Activated B cell treated with CpG ODN at 0.5 μM for 24 hours (primary cell): ENCODE measurements at regions of chr12 and their contacts with region 1.

Region 1: GRCh38 chr12:51341259-51342007 is 5.0 kb downstream of the CELA1 start:
- DNase-seq: peak; percentile 30
- ATAC-seq: peak; percentile 87
- H3K4me3 Mint-ChIP-seq: peak overlapping the region; percentile 20
- H3K27ac Mint-ChIP-seq: peak overlapping the region; percentile 31
- H3K4me1 Mint-ChIP-seq: peaks cover 48% of the 10 kb centered on the region
- H3K27me3 Mint-ChIP-seq: no peaks in the 10 kb centered on the region
- CTCF ChIP-seq: peak; percentile 73

Region 2: GRCh38 chr12:50825372-50825838 is 516.0 kb before region 1 on chr12:
- CTCF ChIA-PET with region 1: interaction called, 12 read pairs
- POLR2A ChIA-PET with region 1: interaction called, 6 read pairs
- intact Hi-C with region 1: loop called (anchors 1 kb)
- DNase-seq: no peak
- ATAC-seq: peak; percentile 80
- H3K4me3 Mint-ChIP-seq: no peak overlapping the region
- H3K27ac Mint-ChIP-seq: no peak overlapping the region
- H3K4me1 Mint-ChIP-seq: peaks cover 6% of the 10 kb centered on the region
- H3K27me3 Mint-ChIP-seq: no peaks in the 10 kb centered on the region
- CTCF ChIP-seq: no peak

Region 3: GRCh38 chr12:51172515-51173431 is 168.7 kb before region 1 on chr12 and contains the start of gene TFCP2:
- CTCF ChIA-PET with region 1: interaction called, 3 read pairs
- POLR2A ChIA-PET with region 1: no interaction called
- intact Hi-C with region 1: loop called (anchors 5 kb)
- DNase-seq: peak; percentile 84
- ATAC-seq: peak; percentile 98
- H3K4me3 Mint-ChIP-seq: peak within 1 kb of the TSS; percentile 77
- H3K27ac Mint-ChIP-seq: peak within 1 kb of the TSS; percentile 68
- H3K4me1 Mint-ChIP-seq: peaks cover 9% of the 10 kb centered on the region
- H3K27me3 Mint-ChIP-seq: no peaks in the 10 kb centered on the region
- CTCF ChIP-seq: no peak
- total RNA-seq, gene TFCP2: 34.9 and 36.7 TPM in 2 replicates

Region 4: DNA sequence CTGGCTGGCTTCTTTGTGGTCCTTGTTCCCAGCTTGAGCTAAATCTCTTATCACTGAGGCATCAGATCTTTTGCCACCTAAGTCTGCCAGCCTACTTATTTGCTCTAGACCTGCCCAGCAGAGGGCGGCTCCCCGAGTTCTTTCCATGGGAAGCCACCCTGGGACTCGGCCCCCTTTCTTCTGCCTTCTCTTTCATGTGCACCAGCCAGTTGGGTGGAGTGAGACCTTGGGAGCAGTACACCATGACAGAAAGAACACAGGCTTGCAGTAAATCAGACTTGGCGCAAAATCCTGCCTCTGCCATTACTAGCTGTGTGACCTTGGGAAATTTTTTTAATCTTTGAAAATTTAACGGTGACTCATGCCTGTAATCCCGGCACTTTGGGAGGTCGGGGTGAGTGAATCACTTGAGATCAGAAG is 78.7 kb before region 1 on chr12:
- CTCF ChIA-PET with region 1: interaction called, 67 read pairs
- POLR2A ChIA-PET with region 1: interaction called, 6 read pairs
- intact Hi-C with region 1: loop called (anchors 1 kb)
- DNase-seq: no peak
- ATAC-seq: peak; percentile 55
- H3K4me3 Mint-ChIP-seq: no peak overlapping the region
- H3K27ac Mint-ChIP-seq: no peak overlapping the region
- H3K4me1 Mint-ChIP-seq: peaks cover 21% of the 10 kb centered on the region
- H3K27me3 Mint-ChIP-seq: no peaks in the 10 kb centered on the region
- CTCF ChIP-seq: no peak

Region 5: DNA sequence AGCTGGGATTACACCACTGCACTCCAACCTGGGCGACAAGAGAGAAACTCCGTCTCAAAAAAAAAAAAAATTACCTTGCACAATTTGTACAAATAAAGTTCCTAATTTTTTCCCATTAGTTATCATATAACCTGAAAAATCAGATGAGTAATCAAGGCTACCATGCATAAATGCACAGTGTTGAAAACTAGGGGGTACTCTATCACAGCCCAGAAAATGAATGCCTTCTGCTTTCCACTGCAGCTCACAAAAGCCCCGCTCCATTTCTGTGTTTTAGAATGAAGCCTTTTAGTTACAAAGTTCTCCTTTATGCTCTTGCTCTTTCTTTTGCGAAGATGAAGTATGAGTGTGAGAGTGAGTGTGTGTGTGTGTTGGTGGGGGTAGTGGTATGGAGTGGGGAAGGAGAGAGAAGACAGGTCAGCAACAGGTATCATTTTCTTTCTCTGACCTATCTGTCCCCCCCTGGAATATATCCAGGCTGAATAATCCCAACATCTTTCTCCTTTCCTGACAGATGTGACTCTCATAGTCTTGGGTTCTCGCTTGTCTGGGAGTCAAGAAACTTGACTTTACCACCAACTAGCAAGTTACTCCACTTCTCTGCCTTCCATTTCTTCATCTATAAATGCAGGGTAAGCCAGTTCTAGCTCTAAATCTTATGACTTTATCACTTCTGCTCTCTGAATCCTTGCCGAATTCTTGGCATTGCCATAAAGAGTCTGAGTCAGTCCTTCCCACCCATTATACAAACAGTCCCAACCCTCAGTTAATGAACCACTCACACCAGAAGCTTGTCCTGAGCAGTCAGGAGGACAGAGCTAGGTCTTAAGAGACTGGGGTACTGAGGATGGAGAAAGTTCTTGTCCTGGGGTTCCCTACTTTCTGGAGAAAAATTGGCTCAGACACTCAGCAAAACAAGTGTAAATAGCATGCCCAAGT is 33.5 kb before region 1 on chr12:
- CTCF ChIA-PET with region 1: interaction called, 18 read pairs
- POLR2A ChIA-PET with region 1: no interaction called
- intact Hi-C with region 1: loop called (anchors 1 kb)
- DNase-seq: no peak
- ATAC-seq: no peak
- H3K4me3 Mint-ChIP-seq: no peak overlapping the region
- H3K27ac Mint-ChIP-seq: peak overlapping the region; percentile 18
- H3K4me1 Mint-ChIP-seq: peaks cover 10% of the 10 kb centered on the region
- H3K27me3 Mint-ChIP-seq: no peaks in the 10 kb centered on the region
- CTCF ChIP-seq: no peak

Region 6: DNA sequence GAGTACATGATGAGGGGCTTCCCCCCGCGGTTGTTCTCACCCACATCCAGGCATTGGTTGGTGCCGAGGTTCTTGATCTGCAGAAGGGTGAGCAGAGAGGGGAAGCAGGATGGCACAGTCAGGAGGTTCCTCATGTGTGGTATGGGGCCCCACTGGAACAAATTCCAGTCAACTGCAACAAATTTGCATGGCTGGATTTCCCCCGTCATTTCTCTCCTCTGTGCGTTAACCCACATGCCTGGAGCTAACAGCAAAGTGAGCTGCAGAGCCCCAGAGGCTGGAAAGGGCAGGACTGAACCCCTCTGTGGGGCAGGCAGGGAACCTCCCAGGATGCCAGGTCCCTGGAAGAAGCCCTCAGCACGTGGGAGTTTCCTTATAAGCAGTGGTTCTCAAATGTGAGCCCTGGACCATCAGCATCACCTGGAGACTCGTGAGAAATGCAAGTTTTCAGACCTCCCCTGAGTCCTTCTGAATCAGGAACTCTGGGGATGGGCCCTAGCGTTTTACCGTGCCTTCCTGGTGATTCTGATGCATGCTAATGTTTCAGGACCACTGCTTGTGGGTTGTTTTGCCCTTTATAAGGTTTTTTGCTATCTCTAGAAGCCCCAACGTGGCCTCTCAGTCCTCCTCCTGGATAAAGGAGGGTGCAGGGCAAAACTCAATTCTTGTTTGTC is 16.1 kb after region 1 on chr12:
- CTCF ChIA-PET with region 1: interaction called, 34 read pairs
- POLR2A ChIA-PET with region 1: interaction called, 4 read pairs
- intact Hi-C with region 1: no loop called
- DNase-seq: peak; percentile 58
- ATAC-seq: peak; percentile 90
- H3K4me3 Mint-ChIP-seq: peak overlapping the region; percentile 65
- H3K27ac Mint-ChIP-seq: peak overlapping the region; percentile 42
- H3K4me1 Mint-ChIP-seq: peaks cover 38% of the 10 kb centered on the region
- H3K27me3 Mint-ChIP-seq: no peaks in the 10 kb centered on the region
- CTCF ChIP-seq: no peak